ENCODE measurements at regions of chr11 and their contacts with region 1.

Region 1: DNA sequence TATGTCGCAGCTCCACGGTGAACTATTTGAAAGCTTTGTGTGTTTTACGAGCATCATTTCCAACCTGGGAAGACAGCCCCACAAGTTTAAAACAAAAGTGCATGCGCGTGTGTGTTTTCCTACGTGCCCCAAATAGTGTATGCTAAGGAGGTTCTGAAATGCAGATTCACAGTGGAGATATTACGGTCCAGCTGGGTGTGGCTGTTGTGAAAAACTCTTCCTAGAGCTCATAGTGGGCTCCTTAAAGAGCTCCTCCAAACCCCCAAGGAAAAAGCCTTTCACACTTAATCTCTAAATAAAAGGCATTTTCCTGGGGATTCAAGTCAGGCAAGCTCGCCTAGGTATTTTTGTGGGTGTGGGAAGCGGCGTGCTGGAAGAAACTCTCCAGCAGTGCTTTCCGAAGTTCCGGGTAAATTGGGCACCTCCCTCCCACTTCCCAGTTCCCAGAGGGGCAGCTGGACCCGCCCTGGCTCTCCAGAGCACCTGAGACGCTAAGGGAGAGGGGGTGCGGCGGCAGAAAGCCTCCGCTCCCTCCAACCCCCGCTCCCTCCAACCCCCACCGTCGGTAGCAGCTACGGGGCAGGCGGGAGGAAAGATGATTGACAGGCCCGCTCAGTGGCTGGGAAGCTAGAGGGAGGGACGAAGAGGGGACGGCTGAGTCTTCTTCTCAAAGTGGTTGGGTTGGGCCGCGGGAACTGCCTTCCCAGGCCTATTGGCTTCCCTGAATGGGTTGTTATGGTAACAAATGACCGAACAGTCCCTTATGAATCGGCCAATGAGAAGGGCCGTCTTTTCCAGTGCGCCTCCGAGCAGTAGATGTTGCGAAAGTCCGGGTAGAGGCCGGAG is 558 bp upstream of the PCF11 start:
- DNase-seq: peak in 7 of 9 donors; percentile 89 to 99 (median 98)
- ATAC-seq: peak; percentile 92
- H3K4me3 ChIP-seq: peak overlapping the region; percentile 90
- H3K4me3 Mint-ChIP-seq: peak overlapping the region; percentile 96 to 100 (median 99)
- H3K27ac ChIP-seq: peak overlapping the region; percentile 98
- H3K27ac Mint-ChIP-seq: peak overlapping the region; percentile 98 to 100 (median 100)
- H3K4me1 ChIP-seq: peaks cover under 1 to 18% of the 10 kb centered on the region in 2 donors
- H3K4me1 Mint-ChIP-seq: peaks cover 11 to 33% (median 23%) of the 10 kb centered on the region in 7 donors
- H3K27me3 ChIP-seq: no peaks in the 10 kb centered on the region
- H3K27me3 Mint-ChIP-seq: peaks cover 0 to 3% (median 0%) of the 10 kb centered on the region in 5 donors

Region 2: DNA sequence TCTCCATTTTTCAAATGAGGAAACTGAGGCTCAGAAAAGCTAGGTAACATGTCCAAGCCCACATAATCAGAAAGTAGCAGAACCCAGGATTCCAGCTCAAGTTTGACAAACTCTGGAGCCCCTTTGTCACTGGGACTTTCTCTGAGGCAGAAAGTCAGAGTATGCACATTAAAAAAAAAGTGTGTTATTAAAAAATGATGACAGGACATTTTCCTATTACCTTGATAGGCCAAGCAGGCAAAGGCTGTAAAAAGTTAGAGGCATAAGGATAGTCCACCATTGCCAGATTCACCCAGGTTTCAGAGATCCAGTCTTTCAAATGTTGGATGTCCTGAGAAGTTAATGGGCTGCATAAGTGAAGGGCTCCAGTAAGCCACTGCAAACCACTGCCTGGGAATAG is 307.5 kb before region 1 on chr11:
- CTCF ChIA-PET with region 1: no interaction called
- POLR2A ChIA-PET with region 1: no interaction called
- intact Hi-C with region 1: no loop called
- DNase-seq: no peak
- ATAC-seq: no peak
- H3K4me3 ChIP-seq: no peak overlapping the region
- H3K4me3 Mint-ChIP-seq: no peak overlapping the region
- H3K27ac ChIP-seq: no peak overlapping the region
- H3K27ac Mint-ChIP-seq: no peak overlapping the region
- H3K4me1 ChIP-seq: no peaks in the 10 kb centered on the region
- H3K4me1 Mint-ChIP-seq: peaks cover 0 to 4% (median under 1%) of the 10 kb centered on the region in 7 donors
- H3K27me3 ChIP-seq: no peaks in the 10 kb centered on the region
- H3K27me3 Mint-ChIP-seq: no peaks in the 10 kb centered on the region

Region 3: GRCh38 chr11:82900277-82901164 is 255.9 kb before region 1 on chr11 and contains the start of gene PRCP:
- CTCF ChIA-PET with region 1: interaction called, 6 read pairs
- POLR2A ChIA-PET with region 1: interaction called, 72 read pairs
- intact Hi-C with region 1: loop called (anchors 1 kb)
- DNase-seq: peak; percentile 81 to 94 (median 89)
- ATAC-seq: peak; percentile 87
- H3K4me3 ChIP-seq: peak within 1 kb of the TSS; percentile 73
- H3K4me3 Mint-ChIP-seq: peak within 1 kb of the TSS; percentile 93 to 100 (median 98)
- H3K27ac ChIP-seq: peak within 1 kb of the TSS; percentile 92
- H3K27ac Mint-ChIP-seq: peak within 1 kb of the TSS; percentile 92 to 100 (median 100)
- H3K4me1 ChIP-seq: peaks cover 12 to 13% of the 10 kb centered on the region in 2 donors
- H3K4me1 Mint-ChIP-seq: peaks cover 26 to 58% (median 34%) of the 10 kb centered on the region in 7 donors
- H3K27me3 ChIP-seq: no peaks in the 10 kb centered on the region
- H3K27me3 Mint-ChIP-seq: no peaks in the 10 kb centered on the region
- total RNA-seq, gene PRCP: 19.9 to 42.3 (median 31.8) TPM

Region 4: GRCh38 chr11:82969811-82970210 is 186.6 kb before region 1 on chr11:
- CTCF ChIA-PET with region 1: no interaction called
- POLR2A ChIA-PET with region 1: interaction called, 24 read pairs
- intact Hi-C with region 1: no loop called
- DNase-seq: peak in 2 of 9 donors; percentile 25 to 34
- ATAC-seq: no peak
- H3K4me3 ChIP-seq: no peak overlapping the region
- H3K4me3 Mint-ChIP-seq: peak overlapping the region in 7 of 10 donors; percentile 42 to 73 (median 58)
- H3K27ac ChIP-seq: no peak overlapping the region
- H3K27ac Mint-ChIP-seq: peak overlapping the region in 8 of 9 donors; percentile 68 to 93 (median 86)
- H3K4me1 ChIP-seq: peaks cover 6 to 13% of the 10 kb centered on the region in 2 donors
- H3K4me1 Mint-ChIP-seq: peaks cover 13 to 67% (median 58%) of the 10 kb centered on the region in 7 donors
- H3K27me3 ChIP-seq: no peaks in the 10 kb centered on the region
- H3K27me3 Mint-ChIP-seq: peaks cover 0 to 18% (median 0%) of the 10 kb centered on the region in 5 donors

Region 5: GRCh38 chr11:83087035-83087434 is 69.3 kb before region 1 on chr11:
- CTCF ChIA-PET with region 1: interaction called, 4 read pairs
- POLR2A ChIA-PET with region 1: interaction called, 47 read pairs
- intact Hi-C with region 1: loop called in 1 of 2 experiments (anchors 1 kb)
- DNase-seq: no peak
- ATAC-seq: no peak
- H3K4me3 ChIP-seq: no peak overlapping the region
- H3K4me3 Mint-ChIP-seq: no peak overlapping the region
- H3K27ac ChIP-seq: peak overlapping the region; percentile 10
- H3K27ac Mint-ChIP-seq: peak overlapping the region in 8 of 9 donors; percentile 10 to 74 (median 38)
- H3K4me1 ChIP-seq: peaks cover 0 to 4% of the 10 kb centered on the region in 2 donors
- H3K4me1 Mint-ChIP-seq: peaks cover 8 to 44% (median 32%) of the 10 kb centered on the region in 7 donors
- H3K27me3 ChIP-seq: no peaks in the 10 kb centered on the region
- H3K27me3 Mint-ChIP-seq: no peaks in the 10 kb centered on the region

Region 6: GRCh38 chr11:83168756-83169155 is 12.4 kb after region 1 on chr11:
- CTCF ChIA-PET with region 1: interaction called, 3 read pairs
- POLR2A ChIA-PET with region 1: interaction called, 62 read pairs
- intact Hi-C with region 1: loop called (anchors 1 kb)
- DNase-seq: no peak
- ATAC-seq: no peak
- H3K4me3 ChIP-seq: no peak overlapping the region
- H3K4me3 Mint-ChIP-seq: peak overlapping the region in 7 of 10 donors; percentile 27 to 85 (median 43)
- H3K27ac ChIP-seq: no peak overlapping the region
- H3K27ac Mint-ChIP-seq: peak overlapping the region in 4 of 9 donors; percentile 32 to 69 (median 34)
- H3K4me1 ChIP-seq: peaks cover 43 to 46% of the 10 kb centered on the region in 2 donors
- H3K4me1 Mint-ChIP-seq: peaks cover 50 to 99% (median 87%) of the 10 kb centered on the region in 7 donors
- H3K27me3 ChIP-seq: no peaks in the 10 kb centered on the region
- H3K27me3 Mint-ChIP-seq: no peaks in the 10 kb centered on the region

Region 7: GRCh38 chr11:83187465-83187864 is 31.1 kb after region 1 on chr11:
- CTCF ChIA-PET with region 1: no interaction called
- POLR2A ChIA-PET with region 1: interaction called, 12 read pairs
- intact Hi-C with region 1: no loop called
- DNase-seq: no peak
- ATAC-seq: no peak
- H3K4me3 ChIP-seq: no peak overlapping the region
- H3K4me3 Mint-ChIP-seq: no peak overlapping the region
- H3K27ac ChIP-seq: no peak overlapping the region
- H3K27ac Mint-ChIP-seq: peak overlapping the region in 8 of 9 donors; percentile 11 to 84 (median 45)
- H3K4me1 ChIP-seq: peaks cover 5 to 6% of the 10 kb centered on the region in 2 donors
- H3K4me1 Mint-ChIP-seq: peaks cover 12 to 23% (median 17%) of the 10 kb centered on the region in 7 donors
- H3K27me3 ChIP-seq: no peaks in the 10 kb centered on the region
- H3K27me3 Mint-ChIP-seq: no peaks in the 10 kb centered on the region

Region 8: GRCh38 chr11:83272627-83273026 is 116.3 kb after region 1 on chr11:
- CTCF ChIA-PET with region 1: no interaction called
- POLR2A ChIA-PET with region 1: no interaction called
- intact Hi-C with region 1: no loop called
- DNase-seq: no peak
- ATAC-seq: no peak
- H3K4me3 ChIP-seq: no peak overlapping the region
- H3K4me3 Mint-ChIP-seq: no peak overlapping the region
- H3K27ac ChIP-seq: no peak overlapping the region
- H3K27ac Mint-ChIP-seq: no peak overlapping the region
- H3K4me1 ChIP-seq: no peaks in the 10 kb centered on the region
- H3K4me1 Mint-ChIP-seq: peaks cover 7 to 31% (median 27%) of the 10 kb centered on the region in 7 donors
- H3K27me3 ChIP-seq: no peaks in the 10 kb centered on the region
- H3K27me3 Mint-ChIP-seq: no peaks in the 10 kb centered on the region

Region 9: DNA sequence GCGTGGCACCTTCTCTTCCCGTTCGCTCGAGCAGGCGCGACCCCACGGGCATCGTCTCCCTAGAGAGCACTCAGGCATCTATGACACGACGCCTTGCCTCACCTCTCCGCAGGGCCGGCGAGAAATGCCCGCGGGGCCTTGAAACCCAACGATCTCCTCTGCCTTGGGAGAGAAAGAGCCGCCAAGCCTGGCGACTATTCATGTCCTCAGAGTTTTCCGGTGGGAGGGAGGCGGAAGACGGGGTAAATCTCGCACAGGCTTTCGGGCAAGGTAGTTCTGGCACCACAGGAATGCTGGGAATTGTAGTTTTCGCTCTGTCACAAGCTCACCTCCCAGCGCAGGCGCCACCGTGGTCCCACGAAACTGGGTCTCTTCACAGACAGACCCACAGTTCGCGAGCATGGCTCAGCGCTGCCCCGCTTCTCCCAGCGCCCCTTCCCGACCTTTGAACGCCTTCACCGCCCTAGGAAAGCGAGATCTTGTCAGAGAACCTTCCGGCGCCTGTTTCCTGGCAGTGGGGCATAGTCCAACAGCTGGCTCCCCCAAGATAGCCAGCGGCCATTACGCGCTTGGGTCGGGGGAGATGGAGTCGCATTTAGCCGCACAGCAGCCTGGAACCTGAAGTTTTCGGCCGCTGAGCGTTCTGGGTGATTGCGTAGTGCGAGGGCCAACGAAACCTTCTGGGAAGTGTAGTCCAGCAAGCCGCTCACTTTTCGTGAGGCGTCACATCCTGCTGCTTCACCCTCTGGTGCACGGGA is 129.6 kb after region 1 on chr11 and contains the start of gene CCDC90B:
- CTCF ChIA-PET with region 1: no interaction called
- POLR2A ChIA-PET with region 1: interaction called, 20 read pairs
- intact Hi-C with region 1: loop called (anchors 1 kb)
- DNase-seq: peak; percentile 83 to 97 (median 96)
- ATAC-seq: peak; percentile 93
- H3K4me3 ChIP-seq: peak within 1 kb of the TSS; percentile 93
- H3K4me3 Mint-ChIP-seq: peak within 1 kb of the TSS; percentile 92 to 100 (median 98)
- H3K27ac ChIP-seq: peak within 1 kb of the TSS; percentile 95
- H3K27ac Mint-ChIP-seq: peak within 1 kb of the TSS; percentile 98 to 100 (median 99)
- H3K4me1 ChIP-seq: peaks cover 14 to 23% of the 10 kb centered on the region in 2 donors
- H3K4me1 Mint-ChIP-seq: peaks cover 19 to 52% (median 36%) of the 10 kb centered on the region in 7 donors
- H3K27me3 ChIP-seq: no peaks in the 10 kb centered on the region
- H3K27me3 Mint-ChIP-seq: peaks cover 0 to 11% (median 0%) of the 10 kb centered on the region in 5 donors
- total RNA-seq, gene CCDC90B: 19.1 to 40.8 (median 27.8) TPM

Region 10: DNA sequence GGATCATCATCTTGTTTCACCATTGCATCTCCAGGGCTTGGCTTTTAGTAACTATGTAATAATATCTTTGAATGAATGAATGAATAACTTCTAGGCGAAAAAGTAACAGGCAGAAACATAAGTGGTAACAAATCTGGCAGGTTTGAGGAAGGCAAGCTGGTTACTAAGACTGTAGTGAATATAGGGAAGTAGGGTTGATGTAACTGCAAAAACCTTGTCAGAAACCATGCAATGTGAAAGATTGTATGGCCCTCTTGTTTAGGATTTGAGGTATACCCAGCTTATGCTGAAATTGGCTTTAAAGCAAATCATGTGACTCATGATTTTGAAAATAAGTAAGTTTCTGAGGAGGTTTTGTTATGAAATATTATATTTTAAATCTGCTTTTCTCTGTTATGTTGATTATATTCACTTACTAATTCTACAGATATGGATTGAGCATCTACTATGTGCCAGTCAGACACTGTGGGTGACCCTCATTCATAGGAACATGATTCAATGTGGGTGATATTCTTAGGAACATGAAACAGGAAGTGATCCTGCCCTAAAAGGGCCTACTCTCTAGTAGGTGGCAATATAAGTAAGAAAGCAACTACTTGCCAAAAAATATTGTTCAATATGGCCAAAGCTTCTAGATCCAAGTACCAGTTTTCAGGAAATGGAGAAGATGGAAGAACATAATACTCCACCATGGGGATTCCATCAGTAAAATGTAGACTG is 245.3 kb after region 1 on chr11:
- CTCF ChIA-PET with region 1: no interaction called
- POLR2A ChIA-PET with region 1: no interaction called
- intact Hi-C with region 1: no loop called
- DNase-seq: no peak
- ATAC-seq: no peak
- H3K4me3 ChIP-seq: no peak overlapping the region
- H3K4me3 Mint-ChIP-seq: no peak overlapping the region
- H3K27ac ChIP-seq: no peak overlapping the region
- H3K27ac Mint-ChIP-seq: no peak overlapping the region
- H3K4me1 ChIP-seq: no peaks in the 10 kb centered on the region
- H3K4me1 Mint-ChIP-seq: no peaks in the 10 kb centered on the region
- H3K27me3 ChIP-seq: no peaks in the 10 kb centered on the region
- H3K27me3 Mint-ChIP-seq: peaks cover 0 to 10% (median 0%) of the 10 kb centered on the region in 5 donors